ENCODE measurements at regions of chr5 and their contacts with region 1.

Region 1: GRCh38 chr5:100903039-100903887 is at the start of gene ST8SIA4:
- DNase-seq: peak; percentile 94
- H3K4me3 ChIP-seq: peak within 1 kb of the TSS; percentile 87
- H3K27ac ChIP-seq: peak within 1 kb of the TSS; percentile 94
- H3K4me1 ChIP-seq: peaks cover 33% of the 10 kb centered on the region
- CTCF ChIP-seq: no peak
- total RNA-seq, gene ST8SIA4: 10.2 and 14.9 TPM in 2 replicates

Region 2: DNA sequence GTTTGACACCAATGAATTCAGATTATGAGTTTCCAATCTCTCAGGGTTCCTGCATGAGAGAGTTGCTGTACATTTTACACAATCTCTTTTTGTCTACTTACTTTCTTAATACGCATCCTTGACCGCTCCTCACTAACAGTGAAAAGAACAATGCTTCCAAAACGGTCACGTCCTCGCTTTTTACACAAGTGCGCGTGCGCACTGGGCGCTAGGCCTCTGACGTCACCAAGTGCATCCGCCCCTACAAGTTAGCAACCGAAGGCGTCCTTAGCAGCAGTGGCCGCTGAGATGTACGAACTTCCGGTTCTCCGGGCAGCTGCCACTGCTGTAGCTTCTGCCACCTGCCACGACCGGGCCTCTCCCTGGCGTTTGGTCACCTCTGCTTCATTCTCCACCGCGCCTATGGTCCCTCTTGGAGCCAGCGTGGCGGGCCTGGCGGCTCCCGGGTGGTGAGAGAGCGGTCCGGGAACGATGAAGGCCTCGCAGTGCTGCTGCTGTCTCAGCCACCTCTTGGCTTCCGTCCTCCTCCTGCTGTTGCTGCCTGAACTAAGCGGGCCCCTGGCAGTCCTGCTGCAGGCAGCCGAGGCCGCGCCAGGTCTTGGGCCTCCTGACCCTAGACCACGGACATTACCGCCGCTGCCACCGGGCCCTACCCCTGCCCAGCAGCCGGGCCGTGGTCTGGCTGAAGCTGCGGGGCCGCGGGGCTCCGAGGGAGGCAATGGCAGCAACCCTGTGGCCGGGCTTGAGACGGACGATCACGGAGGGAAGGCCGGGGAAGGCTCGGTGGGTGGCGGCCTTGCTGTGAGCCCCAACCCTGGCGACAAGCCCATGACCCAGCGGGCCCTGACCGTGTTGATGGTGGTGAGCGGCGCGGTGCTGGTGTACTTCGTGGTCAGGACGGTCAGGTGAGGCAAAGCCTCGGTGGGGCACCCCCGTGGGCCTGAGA is 367.9 kb before region 1 on chr5 and contains the start of gene FAM174A:
- CTCF ChIA-PET with region 1: no interaction called
- POLR2A ChIA-PET with region 1: interaction called, 5 read pairs
- intact Hi-C with region 1: loop called (anchors 1 kb)
- DNase-seq: peak; percentile 93
- H3K4me3 ChIP-seq: peak within 1 kb of the TSS; percentile 67
- H3K27ac ChIP-seq: no peak within 1 kb of the TSS
- H3K4me1 ChIP-seq: no peaks in the 10 kb centered on the region
- CTCF ChIP-seq: no peak
- total RNA-seq, gene FAM174A: 0.64 and 1.2 TPM in 2 replicates

Region 3: GRCh38 chr5:100777680-100778281 is 125.5 kb before region 1 on chr5:
- CTCF ChIA-PET with region 1: interaction called, 5 read pairs
- POLR2A ChIA-PET with region 1: interaction called, 290 read pairs
- intact Hi-C with region 1: loop called (anchors 1 kb)
- DNase-seq: peak; percentile 65
- H3K4me3 ChIP-seq: peak overlapping the region; percentile 28
- H3K27ac ChIP-seq: no peak overlapping the region
- H3K4me1 ChIP-seq: peaks cover 78% of the 10 kb centered on the region
- CTCF ChIP-seq: no peak

Region 4: GRCh38 chr5:100818340-100818739 is 84.9 kb before region 1 on chr5:
- CTCF ChIA-PET with region 1: interaction called, 3 read pairs
- POLR2A ChIA-PET with region 1: interaction called, 18 read pairs
- intact Hi-C with region 1: no loop called
- DNase-seq: no peak
- H3K4me3 ChIP-seq: no peak overlapping the region
- H3K27ac ChIP-seq: no peak overlapping the region
- H3K4me1 ChIP-seq: peaks cover 9% of the 10 kb centered on the region
- CTCF ChIP-seq: no peak

Region 5: DNA sequence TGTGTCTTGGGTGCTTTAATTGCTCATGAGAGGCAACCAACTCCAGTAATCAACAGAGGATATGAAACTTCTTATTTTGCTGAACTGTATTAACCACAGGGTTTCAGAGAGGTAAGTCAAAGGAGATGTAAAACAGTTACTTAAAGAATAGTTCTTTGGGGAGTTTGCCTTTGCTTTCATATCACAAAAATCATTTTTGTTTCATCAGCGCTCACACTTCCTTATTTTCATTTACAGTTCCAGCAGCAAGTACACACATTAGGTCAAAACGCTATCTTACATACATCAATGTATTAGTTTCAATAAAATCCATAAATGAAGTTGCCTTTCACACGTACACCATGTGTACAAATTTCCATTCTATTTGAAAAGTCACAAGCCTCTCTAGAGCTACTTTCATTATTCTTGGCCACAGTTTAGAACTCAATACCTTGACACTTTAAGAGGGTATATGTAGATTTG is 50.2 kb before region 1 on chr5:
- CTCF ChIA-PET with region 1: interaction called, 4 read pairs
- POLR2A ChIA-PET with region 1: interaction called, 140 read pairs
- intact Hi-C with region 1: loop called (anchors 1 kb)
- DNase-seq: peak; percentile 91
- H3K4me3 ChIP-seq: peak overlapping the region; percentile 54
- H3K27ac ChIP-seq: peak overlapping the region; percentile 98
- H3K4me1 ChIP-seq: peaks cover 75% of the 10 kb centered on the region
- CTCF ChIP-seq: no peak

Region 6: DNA sequence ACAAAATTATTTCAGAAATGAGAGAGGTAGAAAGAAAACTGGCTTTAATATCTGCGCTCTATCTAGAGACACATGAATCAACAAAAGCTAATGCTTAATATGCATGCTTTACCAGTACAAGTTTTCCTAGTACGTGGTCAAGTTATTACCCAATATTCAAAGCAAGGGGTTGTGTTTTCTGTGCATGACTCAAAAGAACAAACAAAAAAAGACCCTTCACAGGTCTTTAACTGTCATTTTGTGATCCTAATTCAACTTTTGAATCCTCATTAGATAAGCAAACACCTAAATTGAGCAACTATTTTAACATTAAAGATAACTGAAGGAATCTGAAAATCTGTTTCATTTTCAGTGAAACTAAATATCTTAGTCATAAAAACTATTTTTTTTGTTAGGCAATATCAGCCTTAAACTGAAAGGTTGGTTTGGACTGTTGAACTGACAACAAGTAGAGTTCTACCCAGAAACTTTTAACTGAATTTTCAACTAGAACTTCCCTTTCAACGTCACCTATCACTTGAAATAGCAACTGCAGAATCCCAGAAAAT is 12.7 kb before region 1 on chr5:
- CTCF ChIA-PET with region 1: interaction called, 5 read pairs
- POLR2A ChIA-PET with region 1: interaction called, 260 read pairs
- intact Hi-C with region 1: loop called (anchors 1 kb)
- DNase-seq: peak; percentile 34
- H3K4me3 ChIP-seq: peak overlapping the region; percentile 60
- H3K27ac ChIP-seq: peak overlapping the region; percentile 96
- H3K4me1 ChIP-seq: peaks cover 84% of the 10 kb centered on the region
- CTCF ChIP-seq: no peak